Ascending aorta (tissue), 2 donors: ENCODE measurements at regions of chr4 and their contacts with region 1.

Region 1: GRCh38 chr4:10237131-10237530 is 120.5 kb upstream of the WDR1 start:
- DNase-seq: no peak
- H3K4me3 ChIP-seq: no peak overlapping the region
- H3K27ac ChIP-seq: no peak overlapping the region
- H3K4me1 ChIP-seq: peaks cover 0 to under 1% of the 10 kb centered on the region in 2 donors
- H3K27me3 ChIP-seq: no peaks in the 10 kb centered on the region
- CTCF ChIP-seq: no peak

Region 2: DNA sequence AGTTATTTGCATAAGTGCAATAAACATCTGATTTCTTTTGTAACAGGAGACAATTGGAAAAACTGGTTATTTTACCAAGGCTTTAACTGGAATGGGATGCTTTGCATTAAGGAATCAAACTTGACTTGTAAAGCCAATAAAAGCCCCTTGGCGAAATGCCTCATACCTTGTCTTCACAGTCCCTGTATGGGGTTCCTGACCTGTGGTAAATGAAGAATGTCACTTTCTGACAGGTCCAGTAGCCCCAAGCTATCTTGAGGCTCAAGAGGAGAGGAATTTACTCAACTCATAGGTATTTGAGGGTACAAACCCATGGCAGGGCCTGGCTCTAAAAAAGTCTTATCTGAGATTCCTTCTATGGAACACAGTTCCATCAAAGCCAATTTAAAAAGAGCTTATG is 1874.6 kb before region 1 on chr4:
- intact Hi-C with region 1: no loop called
- DNase-seq: peak in 1 of 2 donors; percentile 33
- H3K4me3 ChIP-seq: no peak overlapping the region
- H3K27ac ChIP-seq: peak overlapping the region in 1 of 2 donors; percentile 9
- H3K4me1 ChIP-seq: peaks cover 0 to 7% of the 10 kb centered on the region in 2 donors
- H3K27me3 ChIP-seq: no peaks in the 10 kb centered on the region
- CTCF ChIP-seq: no peak

Region 3: GRCh38 chr4:10204401-10205058 is 32.6 kb before region 1 on chr4:
- intact Hi-C with region 1: loop called (anchors 1 kb)
- DNase-seq: no peak
- H3K4me3 ChIP-seq: no peak overlapping the region
- H3K27ac ChIP-seq: no peak overlapping the region
- H3K4me1 ChIP-seq: no peaks in the 10 kb centered on the region
- H3K27me3 ChIP-seq: no peaks in the 10 kb centered on the region
- CTCF ChIP-seq: no peak

Region 4: DNA sequence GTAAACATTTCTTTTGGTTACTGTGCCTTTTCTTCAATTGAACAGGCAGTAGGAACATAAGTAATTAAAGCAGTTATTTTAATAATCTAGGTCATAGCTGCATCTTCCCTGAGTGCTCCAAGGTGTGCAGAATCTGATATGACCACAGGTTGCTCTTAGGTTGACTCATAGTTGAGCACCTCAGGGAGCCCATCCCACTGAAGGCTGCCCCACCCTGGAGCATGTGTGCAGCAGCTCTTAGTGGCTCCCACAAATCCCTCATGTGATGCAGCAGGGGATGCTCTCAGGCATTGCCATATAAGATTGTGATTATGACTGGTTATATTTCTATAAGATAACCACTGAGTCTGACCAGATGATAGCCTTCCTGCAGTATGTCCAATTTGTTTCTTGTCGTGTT is 147.8 kb after region 1 on chr4:
- intact Hi-C with region 1: no loop called
- DNase-seq: no peak
- H3K4me3 ChIP-seq: no peak overlapping the region
- H3K27ac ChIP-seq: no peak overlapping the region
- H3K4me1 ChIP-seq: no peaks in the 10 kb centered on the region
- H3K27me3 ChIP-seq: no peaks in the 10 kb centered on the region
- CTCF ChIP-seq: no peak